Gastrocnemius medialis (tissue), 4 donors: ENCODE measurements at regions of chrX and their contacts with region 1.

Region 1: GRCh38 chrX:16695079-16695676 is 17.3 kb downstream of the CTPS2 start:
- DNase-seq: peak in 1 of 2 donors; percentile 27
- ATAC-seq: no peak
- H3K4me3 ChIP-seq: no peak overlapping the region
- H3K27ac ChIP-seq: no peak overlapping the region
- H3K4me1 ChIP-seq: no peaks in the 10 kb centered on the region
- H3K27me3 ChIP-seq: no peaks in the 10 kb centered on the region
- CTCF ChIP-seq: peak; percentile 52 to 87 (median 70)
- POLR2A ChIP-seq: no peak

Region 2: DNA sequence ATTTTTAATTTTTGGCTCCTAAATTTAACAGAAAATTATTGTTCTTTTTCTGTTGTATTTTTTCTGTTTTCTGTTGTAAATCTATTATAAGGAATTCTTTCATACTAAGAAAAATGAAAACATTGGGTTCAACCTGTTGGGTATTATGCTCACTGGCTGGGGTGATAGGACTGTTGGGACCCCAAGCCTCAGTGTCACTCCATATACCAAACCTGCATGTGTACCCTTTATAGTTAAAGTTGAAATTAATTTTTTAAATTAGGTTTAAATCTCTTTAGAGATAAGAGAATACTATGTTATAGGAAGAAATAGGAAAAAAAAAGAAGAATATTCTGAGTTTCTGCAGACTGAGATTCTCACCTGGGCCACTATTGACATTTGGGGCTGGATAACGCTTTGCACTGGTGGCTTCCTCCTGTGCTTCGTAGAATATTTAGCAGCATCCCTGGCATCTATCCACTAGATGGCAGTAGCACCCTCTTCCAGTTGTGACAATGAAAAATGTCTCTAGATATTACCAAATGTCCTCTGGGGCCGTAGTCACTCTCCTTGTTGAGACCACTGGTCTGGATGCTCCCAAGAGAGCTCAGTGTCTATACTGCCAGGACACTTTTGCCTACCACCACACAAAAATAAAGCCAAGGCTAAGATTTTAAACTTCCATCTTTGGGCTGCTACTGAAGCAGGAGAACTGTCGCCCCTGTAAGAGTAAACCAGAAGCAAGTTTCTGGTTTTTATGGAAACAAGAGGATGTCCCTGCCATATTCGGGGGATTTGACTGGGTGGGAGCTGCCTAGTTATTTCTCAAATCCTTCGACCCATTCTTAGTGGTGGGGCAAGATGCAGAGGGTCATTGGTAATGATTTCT is 1008.1 kb before region 1 on chrX:
- in situ Hi-C with region 1: loop called in 2 of 4 experiments (anchors 25 kb)
- intact Hi-C with region 1: loop called (anchors 10 kb)
- DNase-seq: peak; percentile 24 to 35
- ATAC-seq: peak; percentile 73 to 87
- H3K4me3 ChIP-seq: no peak overlapping the region
- H3K27ac ChIP-seq: no peak overlapping the region
- H3K4me1 ChIP-seq: peaks cover 0 to 3% of the 10 kb centered on the region in 2 donors
- H3K27me3 ChIP-seq: no peaks in the 10 kb centered on the region
- CTCF ChIP-seq: peak; percentile 32 to 78 (median 65)
- POLR2A ChIP-seq: no peak

Region 3: GRCh38 chrX:16123222-16123786 is 571.9 kb before region 1 on chrX and contains the start of gene GRPR:
- in situ Hi-C with region 1: no loop called
- intact Hi-C with region 1: loop called (anchors 10 kb)
- DNase-seq: peak; percentile 6 to 45
- ATAC-seq: peak in 1 of 2 donors; percentile 76
- H3K4me3 ChIP-seq: no peak within 1 kb of the TSS
- H3K27ac ChIP-seq: no peak within 1 kb of the TSS
- H3K4me1 ChIP-seq: no peaks in the 10 kb centered on the region
- H3K27me3 ChIP-seq: no peaks in the 10 kb centered on the region
- CTCF ChIP-seq: peak; percentile 15 to 70 (median 51)
- POLR2A ChIP-seq: no peak
- total RNA-seq, gene GRPR: not detected